Pancreas (tissue), 10 donors: ENCODE measurements at regions of chr17 and their contacts with region 1.

Region 1: DNA sequence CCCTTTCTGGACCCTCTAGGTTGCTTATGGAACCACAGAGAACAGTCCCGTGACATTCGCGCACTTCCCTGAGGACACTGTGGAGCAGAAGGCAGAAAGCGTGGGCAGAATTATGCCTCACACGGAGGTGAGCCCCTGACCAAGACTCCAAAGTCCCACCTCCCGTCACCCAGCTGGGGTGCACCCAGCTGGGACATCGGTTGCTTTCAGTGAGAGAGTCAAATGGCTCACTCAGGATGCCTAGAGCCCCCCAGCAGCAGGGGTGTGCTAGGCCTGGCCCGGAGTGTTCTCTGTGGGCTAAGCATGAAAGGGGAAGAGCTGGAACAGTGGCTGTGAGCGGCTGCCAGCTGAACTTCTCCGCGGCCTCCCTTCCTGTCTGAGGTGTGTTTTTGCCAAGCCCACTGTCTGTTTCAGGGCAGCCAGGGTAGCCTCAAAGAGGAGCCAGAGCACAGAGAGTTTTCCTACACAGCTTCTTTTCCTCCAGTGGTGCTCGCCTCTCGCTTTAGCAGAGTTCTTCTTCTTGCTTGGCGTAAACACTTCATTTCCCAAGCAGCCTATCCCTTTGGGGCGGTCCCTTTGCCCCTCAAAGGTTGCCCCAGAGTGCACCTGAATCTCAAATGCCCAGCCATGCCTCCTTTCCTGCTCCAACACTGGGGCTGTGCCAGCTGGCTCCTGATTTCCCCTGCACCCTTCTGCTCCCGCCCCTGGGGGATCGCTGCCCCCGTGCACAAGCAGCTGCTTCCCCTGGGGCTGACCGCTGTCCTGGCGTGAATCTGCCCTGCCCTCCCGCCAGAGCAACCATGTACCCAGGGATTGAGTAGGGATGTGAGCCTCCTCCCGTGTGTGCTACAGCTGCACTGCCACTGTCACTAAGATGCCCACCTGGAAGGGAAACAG is 2.6 kb upstream of the CHAD start:
- DNase-seq: peak in 1 of 6 donors; percentile 12
- ATAC-seq: no peak
- H3K4me3 ChIP-seq: no peak overlapping the region
- H3K27ac ChIP-seq: no peak overlapping the region
- H3K4me1 ChIP-seq: no peaks in the 10 kb centered on the region
- H3K27me3 ChIP-seq: no peaks in the 10 kb centered on the region
- CTCF ChIP-seq: no peak

Region 2: DNA sequence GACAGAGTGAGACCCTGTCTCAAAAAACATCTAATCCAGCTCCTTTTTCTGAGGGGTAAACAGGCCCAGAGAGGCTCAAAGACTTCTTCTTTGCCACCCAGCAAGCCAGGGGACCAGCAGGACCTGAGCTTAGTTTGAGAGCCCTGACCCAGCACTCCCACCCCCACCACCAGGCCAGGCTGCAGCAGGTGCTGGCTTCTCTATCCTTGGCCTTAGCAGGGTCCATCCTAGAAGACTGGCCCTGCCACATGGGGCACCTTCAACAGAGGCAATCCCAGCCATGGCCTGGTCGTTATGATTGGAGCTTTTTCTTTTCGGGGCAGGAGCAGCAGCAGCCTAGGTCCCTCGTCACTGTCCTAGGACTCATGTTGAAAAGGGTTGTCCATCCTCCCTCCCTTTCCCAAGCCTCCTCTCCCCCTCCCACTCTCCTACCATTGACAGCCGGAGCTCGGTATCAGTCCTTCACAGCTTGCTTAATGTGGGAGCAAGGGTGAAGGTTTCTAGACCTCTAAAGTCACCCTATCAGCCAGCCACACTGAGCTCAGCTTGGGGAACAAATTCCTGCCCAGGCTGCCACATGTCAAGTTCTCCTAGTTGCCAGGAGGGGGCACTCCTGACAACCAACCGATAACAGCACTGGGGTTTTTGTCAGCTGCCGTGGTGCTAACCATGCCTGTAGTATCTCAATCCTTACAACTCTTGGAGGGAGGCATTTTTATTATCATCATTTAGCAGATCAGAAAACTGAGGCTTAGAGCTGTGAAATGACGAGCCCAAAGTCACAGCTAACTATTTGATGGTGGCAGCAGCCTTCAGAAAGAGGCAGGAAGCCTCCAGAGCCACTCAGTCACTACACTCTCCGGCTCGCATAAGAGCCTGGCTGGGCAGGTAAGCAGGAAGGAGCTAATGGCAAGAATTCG is 109.4 kb before region 1 on chr17:
- intact Hi-C with region 1: loop called in 2 of 3 experiments (anchors 5 to 10 kb)
- DNase-seq: peak in 3 of 6 donors; percentile 52 to 71 (median 57)
- ATAC-seq: peak; percentile 82 to 92 (median 89)
- H3K4me3 ChIP-seq: no peak overlapping the region
- H3K27ac ChIP-seq: peak overlapping the region in 1 of 4 donors; percentile 15
- H3K4me1 ChIP-seq: peaks cover 0 to 7% (median 0%) of the 10 kb centered on the region in 3 donors
- H3K27me3 ChIP-seq: no peaks in the 10 kb centered on the region
- CTCF ChIP-seq: peak; percentile 61 to 72 (median 66)

Region 3: GRCh38 chr17:50386510-50386909 is 84.7 kb before region 1 on chr17:
- intact Hi-C with region 1: no loop called
- DNase-seq: peak in 1 of 6 donors; percentile 21
- ATAC-seq: peak in 2 of 4 donors; percentile 20 to 28
- H3K4me3 ChIP-seq: no peak overlapping the region
- H3K27ac ChIP-seq: no peak overlapping the region
- H3K4me1 ChIP-seq: no peaks in the 10 kb centered on the region
- H3K27me3 ChIP-seq: no peaks in the 10 kb centered on the region
- CTCF ChIP-seq: no peak

Region 4: GRCh38 chr17:50564916-50565315 is 93.7 kb after region 1 on chr17:
- intact Hi-C with region 1: no loop called
- DNase-seq: no peak
- ATAC-seq: peak in 2 of 4 donors; percentile 7 to 30
- H3K4me3 ChIP-seq: no peak overlapping the region
- H3K27ac ChIP-seq: no peak overlapping the region
- H3K4me1 ChIP-seq: peaks cover 0 to 14% (median 11%) of the 10 kb centered on the region in 3 donors
- H3K27me3 ChIP-seq: peaks cover 0 to 4% (median 0%) of the 10 kb centered on the region in 4 donors
- CTCF ChIP-seq: no peak